ENCODE measurements at regions of chr16 and their contacts with region 1.

Region 1: DNA sequence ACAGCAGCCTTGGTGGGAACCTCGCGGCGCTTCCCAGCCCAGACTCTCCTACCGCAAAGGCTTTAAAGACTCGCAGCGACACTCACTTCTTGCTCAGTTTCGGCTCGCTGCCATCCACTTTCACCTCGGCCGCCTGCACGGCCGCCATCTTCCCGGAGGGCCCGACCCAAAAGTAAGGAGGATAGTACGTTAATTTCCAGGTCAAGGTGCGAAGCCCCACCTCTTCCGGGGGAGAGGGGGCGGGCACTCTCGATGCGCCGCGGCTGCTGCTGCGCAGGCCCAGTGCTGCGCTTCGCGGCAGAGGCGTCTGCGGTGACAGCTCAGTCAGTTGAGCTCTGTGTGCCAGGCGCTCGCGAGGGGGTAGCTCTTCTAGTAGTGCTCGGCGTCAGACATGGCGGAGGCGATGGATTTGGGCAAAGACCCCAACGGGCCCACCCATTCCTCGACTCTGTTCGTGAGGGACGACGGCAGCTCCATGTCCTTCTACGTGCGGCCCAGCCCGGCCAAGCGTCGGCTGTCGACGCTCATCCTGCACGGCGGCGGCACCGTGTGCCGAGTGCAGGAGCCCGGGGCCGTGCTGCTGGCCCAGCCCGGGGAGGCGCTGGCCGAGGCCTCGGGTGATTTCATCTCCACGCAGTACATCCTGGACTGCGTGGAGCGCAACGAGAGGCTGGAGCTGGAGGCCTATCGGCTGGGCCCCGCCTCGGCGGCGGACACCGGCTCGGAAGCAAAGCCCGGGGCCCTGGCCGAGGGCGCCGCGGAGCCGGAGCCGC is at the starts of genes KARS1 and TERF2IP:
- DNase-seq: peak; percentile 95
- ATAC-seq: peak; percentile 97
- total RNA-seq, gene KARS1: 137 TPM
- total RNA-seq, gene TERF2IP: 50.7 TPM

Region 2: DNA sequence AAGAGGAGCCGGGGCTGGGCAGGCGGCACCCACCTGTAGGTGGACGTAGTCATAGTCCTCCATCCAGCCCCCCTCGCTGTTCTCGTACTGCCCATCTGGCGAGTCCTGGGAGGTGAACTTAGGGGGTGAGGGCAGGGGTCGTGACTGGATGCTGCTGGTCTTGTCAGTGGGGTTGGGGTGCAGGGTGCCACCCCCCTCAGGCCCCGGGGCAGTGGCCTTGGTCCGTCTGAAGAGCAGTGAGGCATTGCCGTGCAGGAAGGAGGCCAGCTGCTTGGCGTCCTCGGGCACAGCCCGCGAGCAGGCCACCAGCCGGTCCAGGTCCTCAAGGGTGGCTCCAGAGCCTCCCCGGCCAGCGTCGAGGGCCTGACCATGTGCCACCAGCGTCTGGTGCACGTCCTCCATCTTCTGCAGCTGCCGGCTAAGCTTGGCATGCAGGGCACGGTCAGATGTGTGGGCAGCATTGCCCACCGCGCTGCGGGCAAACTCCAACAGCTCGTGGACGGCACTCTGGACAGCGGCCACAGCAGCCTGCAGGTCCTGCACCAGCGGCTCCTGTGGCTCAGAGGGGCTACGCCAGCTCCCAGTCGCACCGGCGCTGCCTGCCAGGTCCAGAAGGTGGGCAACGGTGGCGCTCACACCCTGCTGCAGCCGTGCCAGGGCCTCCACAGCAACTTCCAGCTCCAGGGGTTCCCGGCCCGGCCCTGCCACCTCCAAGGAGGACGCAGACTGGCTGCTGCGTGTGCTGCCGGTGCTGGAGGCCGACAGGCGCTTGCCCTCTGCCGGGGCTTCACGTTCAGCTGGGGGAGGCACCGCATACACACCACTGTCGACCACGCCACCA is 412.6 kb before region 1 on chr16:
- intact Hi-C with region 1: no loop called
- DNase-seq: no peak
- ATAC-seq: no peak

Region 3: GRCh38 chr16:75603241-75603640 is 44.4 kb before region 1 on chr16:
- intact Hi-C with region 1: no loop called
- DNase-seq: no peak
- ATAC-seq: no peak

Region 4: DNA sequence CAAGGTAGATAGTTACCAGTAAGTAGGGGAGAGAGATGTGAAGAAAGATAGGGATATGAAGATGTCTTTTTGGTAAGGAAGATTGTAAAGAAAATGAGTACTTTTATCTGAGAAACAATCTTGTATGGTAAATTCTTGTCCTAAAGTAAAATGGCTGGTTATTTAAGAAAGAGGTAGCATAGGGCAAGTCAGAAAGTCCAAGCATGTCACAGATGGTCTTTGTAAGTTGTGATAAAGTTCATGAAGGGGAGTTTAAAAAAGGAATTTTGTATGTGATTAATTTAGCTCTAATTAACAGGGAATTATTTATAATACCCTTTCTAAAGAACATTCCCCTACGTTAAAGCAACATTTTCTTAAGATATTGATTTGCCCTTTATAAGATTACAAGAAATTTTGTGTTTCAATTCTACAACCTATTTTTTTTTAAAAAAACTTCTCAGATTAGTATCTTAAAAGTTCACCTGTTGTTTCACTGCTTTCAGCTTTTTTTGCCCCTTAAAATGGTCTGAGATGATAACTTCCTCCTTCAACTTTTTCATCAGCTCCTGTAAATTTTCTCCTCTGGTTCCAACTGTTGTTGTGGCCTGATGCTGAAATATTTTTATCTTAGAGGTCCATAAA is 94.9 kb after region 1 on chr16:
- intact Hi-C with region 1: no loop called
- DNase-seq: no peak
- ATAC-seq: no peak

Region 5: DNA sequence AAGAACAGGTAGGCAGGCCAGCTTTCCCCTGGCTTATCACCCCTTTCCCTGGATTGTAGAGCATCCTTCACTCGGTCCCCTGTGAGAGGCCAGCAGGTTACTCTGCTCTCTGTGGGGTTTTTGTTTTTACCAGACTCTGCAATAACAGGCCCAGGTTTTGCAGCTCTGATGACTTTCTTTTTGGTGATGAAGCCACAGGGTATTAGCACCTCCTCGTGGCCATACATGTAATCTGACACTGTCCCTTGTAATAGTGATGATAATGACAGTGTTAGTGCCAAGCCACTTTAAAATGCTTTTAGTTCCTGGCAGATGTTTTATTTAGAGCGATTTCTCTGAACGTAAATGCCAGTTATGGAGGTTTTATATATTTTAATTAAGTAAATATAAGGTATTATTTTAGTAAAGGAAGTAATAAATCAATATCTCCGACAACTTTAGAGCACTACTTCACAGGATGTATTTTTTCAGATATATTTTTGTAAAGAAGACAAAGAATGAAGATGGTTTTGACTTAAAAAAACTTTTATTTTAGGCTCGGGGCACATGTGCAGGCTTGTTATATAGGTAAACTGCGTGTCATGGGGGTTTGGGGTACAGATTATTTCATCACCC is 116.6 kb after region 1 on chr16:
- intact Hi-C with region 1: loop called (anchors 10 kb)
- DNase-seq: no peak
- ATAC-seq: peak; percentile 87